Activated CD4-positive, alpha-beta memory T cell treated with anti-CD3 and anti-CD28 coated beads for 36 hours (primary cell): ENCODE measurements at regions of chr15 and their contacts with region 1.

Region 1: DNA sequence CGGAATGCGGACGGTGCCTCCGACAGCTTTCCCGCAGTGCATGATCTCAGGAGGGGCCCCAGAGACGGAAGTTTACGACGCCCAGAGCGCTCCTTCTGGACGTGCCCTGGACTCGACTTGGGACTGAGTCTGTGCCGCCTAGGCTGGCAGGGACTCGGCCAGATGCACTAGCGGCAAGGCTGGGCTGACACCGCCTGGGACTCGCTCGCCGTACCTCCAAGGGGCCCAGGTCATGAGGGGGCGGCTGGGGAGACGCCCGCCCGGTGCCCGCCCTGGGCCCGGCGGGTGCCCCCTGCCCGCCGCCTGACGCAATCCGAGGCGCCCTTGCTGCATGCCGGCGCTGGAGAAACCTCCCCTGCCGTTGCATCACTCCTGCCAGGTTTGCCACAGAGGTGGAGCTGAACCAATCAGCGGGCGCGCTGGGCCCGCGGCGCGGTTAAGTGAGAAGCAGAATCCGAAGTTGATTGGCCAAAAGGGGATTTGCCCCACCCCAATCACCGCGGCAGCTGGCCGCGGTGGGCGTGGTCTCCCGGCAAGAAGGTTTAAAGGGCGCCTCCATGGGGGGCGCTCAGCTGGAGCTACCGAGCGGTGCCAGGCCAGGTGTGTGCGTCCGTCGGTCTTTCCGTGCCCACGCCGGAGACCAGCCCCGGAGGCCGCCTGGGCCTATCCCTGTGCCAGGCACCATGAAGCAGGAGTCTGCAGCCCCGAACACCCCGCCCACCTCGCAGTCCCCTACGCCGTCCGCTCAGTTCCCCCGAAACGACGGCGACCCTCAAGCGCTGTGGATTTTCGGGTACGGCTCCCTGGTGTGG is at the start of gene CHAC1:
- DNase-seq: peak; percentile 98
- H3K4me3 Mint-ChIP-seq: peak within 1 kb of the TSS; percentile 95
- H3K27ac Mint-ChIP-seq: peak within 1 kb of the TSS; percentile 89
- H3K4me1 Mint-ChIP-seq: peaks cover 38% of the 10 kb centered on the region
- H3K27me3 Mint-ChIP-seq: no peaks in the 10 kb centered on the region
- total RNA-seq, gene CHAC1: 21.6 to 22.3 TPM

Region 2: GRCh38 chr15:40928821-40929659 is 24.1 kb before region 1 on chr15 and contains the start of gene DLL4:
- CTCF ChIA-PET with region 1: interaction called, 7 read pairs
- POLR2A ChIA-PET with region 1: interaction called, 6 read pairs
- intact Hi-C with region 1: loop called (anchors 2 kb)
- DNase-seq: peak; percentile 53
- H3K4me3 Mint-ChIP-seq: peak within 1 kb of the TSS; percentile 51
- H3K27ac Mint-ChIP-seq: no peak within 1 kb of the TSS
- H3K4me1 Mint-ChIP-seq: peaks cover 40% of the 10 kb centered on the region
- H3K27me3 Mint-ChIP-seq: peaks cover 62% of the 10 kb centered on the region
- total RNA-seq, gene DLL4: not detected

Region 3: DNA sequence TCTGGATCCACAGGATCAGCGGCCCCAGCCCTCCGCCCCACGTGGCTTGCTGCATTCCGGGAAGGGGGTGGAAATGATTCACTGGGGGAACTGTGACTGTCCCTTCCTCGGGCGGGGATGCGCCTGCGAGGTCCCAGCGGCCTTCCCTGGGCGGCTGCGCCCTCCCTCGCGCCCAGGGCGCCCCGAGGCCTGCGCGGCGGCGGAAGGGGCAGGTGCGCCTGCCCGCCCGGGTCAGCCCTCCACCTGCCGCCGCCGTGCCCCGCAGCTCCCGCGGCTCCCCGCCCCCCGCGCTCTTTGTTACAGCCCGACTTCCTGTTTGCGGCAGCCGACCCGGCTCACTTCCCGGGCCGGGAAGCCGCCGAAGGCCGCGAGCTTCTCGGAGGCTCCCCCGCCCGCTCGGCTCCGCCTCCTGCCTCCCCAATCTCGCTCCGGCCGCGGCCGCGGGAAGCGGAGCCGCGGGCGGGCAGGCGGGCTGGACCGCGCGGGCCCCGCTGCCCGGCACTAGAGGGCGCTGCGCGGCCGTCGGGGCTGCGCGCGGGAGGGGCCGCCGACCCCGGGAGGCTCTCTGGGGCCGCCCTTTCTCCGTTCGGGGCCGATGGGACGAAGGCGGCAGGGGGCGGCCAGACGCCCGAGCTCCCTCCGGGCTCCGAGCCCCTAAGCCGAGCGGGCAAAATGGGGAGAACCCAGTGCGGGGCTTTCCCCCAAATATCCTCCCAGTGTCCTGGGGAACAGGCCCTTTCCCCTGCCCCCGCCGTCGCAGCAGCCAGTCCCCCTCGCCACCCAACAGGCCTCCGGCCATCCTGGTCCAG is 11.4 kb before region 1 on chr15:
- CTCF ChIA-PET with region 1: interaction called, 69 read pairs
- POLR2A ChIA-PET with region 1: interaction called, 45 read pairs
- intact Hi-C with region 1: no loop called
- DNase-seq: peak; percentile 76
- H3K4me3 Mint-ChIP-seq: peak overlapping the region; percentile 77
- H3K27ac Mint-ChIP-seq: peak overlapping the region; percentile 61
- H3K4me1 Mint-ChIP-seq: peaks cover 31% of the 10 kb centered on the region
- H3K27me3 Mint-ChIP-seq: no peaks in the 10 kb centered on the region

Region 4: GRCh38 chr15:41116116-41116871 is 163.2 kb after region 1 on chr15 and contains the start of gene INO80:
- CTCF ChIA-PET with region 1: no interaction called
- POLR2A ChIA-PET with region 1: interaction called, 4 read pairs
- intact Hi-C with region 1: loop called (anchors 5 kb)
- DNase-seq: peak; percentile 98
- H3K4me3 Mint-ChIP-seq: peak within 1 kb of the TSS; percentile 91
- H3K27ac Mint-ChIP-seq: peak within 1 kb of the TSS; percentile 98
- H3K4me1 Mint-ChIP-seq: peaks cover 12% of the 10 kb centered on the region
- H3K27me3 Mint-ChIP-seq: no peaks in the 10 kb centered on the region
- total RNA-seq, gene INO80: 19.9 to 22.8 TPM

Region 5: DNA sequence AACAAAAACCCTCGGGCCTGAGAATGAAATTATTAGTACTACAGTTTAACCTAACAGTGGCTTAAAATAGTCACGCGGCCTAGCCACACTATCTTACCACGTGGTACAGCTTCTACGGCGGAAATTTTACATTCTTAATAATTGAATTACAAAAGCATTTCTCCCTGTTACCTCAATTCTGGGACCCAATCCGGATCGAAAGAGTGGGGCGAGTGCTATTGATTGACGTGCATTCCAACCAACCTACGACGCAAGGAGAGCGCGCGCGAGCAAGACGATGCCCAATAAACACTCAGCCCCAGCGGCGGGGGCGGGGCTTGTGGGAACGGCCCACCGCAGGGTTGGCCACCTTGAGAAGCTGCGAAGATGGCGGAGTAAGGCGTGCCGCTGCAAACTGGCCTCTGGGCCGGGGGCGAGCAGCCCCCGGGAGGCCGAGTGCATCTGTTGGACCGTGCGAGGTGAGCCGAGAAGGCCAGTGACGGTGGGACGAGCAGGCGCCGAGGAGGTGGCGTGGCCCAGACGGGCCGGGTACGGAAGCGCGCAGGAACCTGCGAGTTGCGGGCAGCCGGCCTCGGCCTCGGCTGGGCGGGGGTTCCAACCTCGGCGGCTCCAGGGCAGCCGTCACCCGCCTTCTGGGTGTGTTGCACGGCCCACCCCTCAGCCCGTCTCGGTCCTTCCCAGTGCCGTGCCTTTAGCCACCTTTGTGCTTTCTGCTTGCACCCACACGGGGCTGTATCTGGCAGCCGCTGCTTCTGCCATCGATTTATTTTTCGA is 330.7 kb after region 1 on chr15:
- CTCF ChIA-PET with region 1: no interaction called
- POLR2A ChIA-PET with region 1: no interaction called
- intact Hi-C with region 1: loop called (anchors 2 kb)
- DNase-seq: peak; percentile 98
- H3K4me3 Mint-ChIP-seq: peak overlapping the region; percentile 98
- H3K27ac Mint-ChIP-seq: peak overlapping the region; percentile 92
- H3K4me1 Mint-ChIP-seq: peaks cover 51% of the 10 kb centered on the region
- H3K27me3 Mint-ChIP-seq: peaks cover 2% of the 10 kb centered on the region

Region 6: GRCh38 chr15:41331833-41332787 is 379.0 kb after region 1 on chr15 and contains the start of gene OIP5:
- CTCF ChIA-PET with region 1: no interaction called
- POLR2A ChIA-PET with region 1: interaction called, 4 read pairs
- intact Hi-C with region 1: loop called (anchors 5 kb)
- DNase-seq: peak; percentile 99
- H3K4me3 Mint-ChIP-seq: peak within 1 kb of the TSS; percentile 99
- H3K27ac Mint-ChIP-seq: peak within 1 kb of the TSS; percentile 97
- H3K4me1 Mint-ChIP-seq: peaks cover 23% of the 10 kb centered on the region
- H3K27me3 Mint-ChIP-seq: no peaks in the 10 kb centered on the region
- total RNA-seq, gene OIP5: 11.1 to 13.0 TPM